ENCODE measurements at regions of chr1 and their contacts with region 1.

Region 1: DNA sequence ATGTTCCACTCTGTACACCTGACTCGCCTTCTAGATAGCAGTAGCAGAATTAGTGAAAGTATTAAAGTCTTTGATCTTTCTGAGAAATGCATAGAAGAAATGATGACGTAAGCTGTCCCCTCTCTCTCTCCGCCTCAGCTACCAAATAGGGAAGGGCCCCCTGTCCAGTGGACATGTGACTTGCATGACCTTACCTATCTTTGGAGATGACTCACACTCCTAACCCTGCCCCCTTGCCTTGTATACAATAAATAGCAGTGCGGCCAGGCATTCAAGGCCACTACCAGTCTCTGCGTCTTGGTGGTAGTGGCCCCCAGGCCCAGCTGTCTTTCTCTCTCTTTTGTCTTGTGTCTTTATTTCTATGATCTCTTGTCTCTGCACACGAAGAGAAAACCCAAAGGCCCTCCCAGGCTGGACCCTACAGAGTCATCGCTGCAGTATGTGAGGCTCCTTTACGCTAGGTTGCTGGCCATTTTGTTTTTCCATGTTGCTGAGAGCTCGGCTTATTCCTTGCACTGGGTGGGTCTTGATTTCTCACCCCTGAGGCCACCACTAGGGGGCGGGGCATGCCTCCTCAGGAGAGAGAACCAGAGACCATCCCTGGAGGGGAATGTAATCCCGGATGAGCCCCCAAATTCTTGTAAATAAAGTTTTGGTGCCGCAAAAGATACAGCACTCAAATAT is 16.0 kb upstream of the ZBTB8B start:
- DNase-seq: no peak
- H3K4me3 ChIP-seq: no peak overlapping the region
- H3K27ac ChIP-seq: no peak overlapping the region
- H3K4me1 ChIP-seq: no peaks in the 10 kb centered on the region
- H3K27me3 ChIP-seq: no peaks in the 10 kb centered on the region
- CTCF ChIP-seq: no peak

Region 2: DNA sequence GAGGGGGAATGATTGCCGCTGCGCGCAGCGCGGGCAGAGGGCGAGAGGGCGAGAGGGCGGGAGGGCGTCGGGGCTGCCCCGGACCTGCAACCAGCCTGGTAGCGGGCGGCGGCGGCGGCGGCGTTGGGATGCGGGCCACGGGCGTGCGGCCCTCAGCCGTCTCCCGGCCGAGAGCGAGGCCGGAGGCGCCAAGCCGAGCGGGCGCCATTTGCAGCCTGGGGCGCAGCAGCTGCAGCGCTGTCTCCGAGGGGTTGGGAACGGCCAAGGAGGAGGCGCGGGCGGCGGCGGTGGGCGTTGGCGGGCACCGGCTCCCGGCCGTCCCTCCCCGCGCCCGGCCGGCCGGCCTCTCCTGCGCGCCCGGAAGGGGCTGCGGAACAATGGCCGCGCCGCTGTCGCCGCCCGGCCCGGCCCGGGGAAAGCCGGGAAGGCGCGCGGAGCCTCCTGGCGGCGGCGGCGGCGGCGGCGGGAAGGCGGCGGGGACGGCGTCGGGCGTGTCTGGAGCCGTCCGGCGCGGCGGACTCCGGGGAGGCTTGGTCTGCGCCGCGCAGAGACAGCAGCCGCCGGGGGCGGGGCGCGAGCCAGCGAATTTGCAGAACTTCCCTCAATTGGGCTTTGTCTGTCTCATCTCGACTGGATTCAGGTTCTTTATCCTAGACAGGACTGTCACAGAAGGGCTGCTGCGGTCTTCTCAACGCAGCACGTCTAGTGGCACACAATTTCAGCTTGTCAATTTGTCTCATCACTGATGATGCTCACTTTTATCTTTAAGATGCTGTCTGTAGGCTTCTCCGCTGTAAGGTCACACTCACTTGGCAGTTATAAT is 51.7 kb after region 1 on chr1:
- intact Hi-C with region 1: loop called (anchors 5 kb)
- DNase-seq: peak in 1 of 2 donors; percentile 79
- H3K4me3 ChIP-seq: peak overlapping the region; percentile 70 to 94
- H3K27ac ChIP-seq: peak overlapping the region; percentile 90 to 93
- H3K4me1 ChIP-seq: peaks cover 0 to 7% of the 10 kb centered on the region in 2 donors
- H3K27me3 ChIP-seq: no peaks in the 10 kb centered on the region
- CTCF ChIP-seq: peak in 1 of 3 experiments; percentile 59

Region 3: DNA sequence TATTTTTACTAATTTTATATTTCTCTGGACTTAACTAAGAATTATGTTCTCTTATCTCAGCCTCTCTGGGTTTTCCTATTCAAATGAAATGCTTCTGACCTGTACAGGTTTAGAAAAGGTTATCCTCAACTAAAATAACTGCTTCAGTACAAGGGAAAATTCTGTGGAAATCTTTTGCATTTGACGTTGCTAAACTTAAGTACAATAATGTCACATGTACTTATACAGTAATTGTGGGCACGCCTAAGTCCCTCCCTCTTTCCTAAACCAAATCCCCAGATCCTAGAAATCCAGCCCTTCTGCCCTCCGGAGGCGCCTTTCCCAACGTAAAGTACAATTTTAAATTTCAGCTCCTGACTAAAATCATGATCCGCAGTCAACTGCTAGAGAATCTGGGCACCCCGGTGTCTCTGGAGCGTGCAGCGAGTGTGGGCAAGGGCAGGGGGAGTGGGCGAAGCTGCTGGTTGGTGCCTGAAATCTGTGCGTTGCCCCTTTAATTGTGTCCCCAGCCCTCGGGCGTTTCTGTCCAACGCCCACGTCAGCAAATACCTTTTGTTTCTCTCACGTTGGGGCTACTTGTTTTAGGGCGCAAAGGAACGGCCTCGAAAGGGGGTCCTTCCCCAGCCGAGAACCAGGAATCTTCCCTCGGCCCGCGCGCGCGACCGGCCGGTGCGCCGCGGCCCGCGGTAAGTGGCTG is 90.1 kb after region 1 on chr1 and contains the start of gene ZBTB8A:
- intact Hi-C with region 1: loop called (anchors 1 kb)
- DNase-seq: peak in 1 of 2 donors; percentile 68
- H3K4me3 ChIP-seq: peak within 1 kb of the TSS; percentile 76 to 89
- H3K27ac ChIP-seq: peak within 1 kb of the TSS; percentile 66 to 67
- H3K4me1 ChIP-seq: peaks cover 0 to 7% of the 10 kb centered on the region in 2 donors
- H3K27me3 ChIP-seq: no peaks in the 10 kb centered on the region
- CTCF ChIP-seq: no peak
- total RNA-seq, gene ZBTB8A: 2.2 TPM

Region 4: DNA sequence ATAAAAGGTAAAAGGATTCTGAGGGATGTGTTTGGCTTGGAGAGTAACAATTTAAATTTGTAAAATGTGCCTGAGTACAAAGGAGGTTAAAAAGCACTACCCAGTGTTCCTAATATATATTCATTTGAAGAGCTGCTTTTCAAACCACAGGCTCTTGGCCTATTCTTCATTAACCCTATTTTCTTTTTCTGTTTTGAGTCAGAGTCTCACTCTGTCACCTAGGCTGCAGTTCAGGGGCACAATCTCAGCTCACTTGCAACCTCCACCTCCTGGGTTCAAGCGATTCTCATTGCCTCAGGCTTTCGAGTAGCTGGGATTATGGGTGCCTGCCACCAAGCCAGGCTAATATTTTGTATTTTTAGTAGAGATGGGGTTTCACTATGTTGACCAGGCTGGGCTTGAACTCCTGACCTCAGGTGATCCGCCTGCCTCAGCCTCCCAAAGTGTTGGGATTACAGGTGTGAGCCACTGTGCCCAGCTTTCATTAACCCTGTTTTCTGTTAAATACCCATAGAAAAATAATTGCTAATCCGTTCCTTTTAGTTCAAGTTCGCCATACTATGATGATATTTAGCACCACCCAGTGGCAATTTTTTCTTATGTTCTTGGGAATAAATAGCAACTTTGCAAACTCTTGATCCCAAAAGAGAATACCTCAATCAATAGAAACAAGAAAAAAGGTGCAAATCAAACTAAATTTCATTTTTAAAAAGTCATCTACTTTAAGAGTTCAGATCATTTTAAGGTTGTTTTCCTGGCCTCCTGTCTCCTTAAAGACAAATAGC is 171.0 kb after region 1 on chr1:
- intact Hi-C with region 1: loop called (anchors 5 kb)
- DNase-seq: no peak
- H3K4me3 ChIP-seq: no peak overlapping the region
- H3K27ac ChIP-seq: no peak overlapping the region
- H3K4me1 ChIP-seq: no peaks in the 10 kb centered on the region
- H3K27me3 ChIP-seq: no peaks in the 10 kb centered on the region
- CTCF ChIP-seq: no peak

Region 5: DNA sequence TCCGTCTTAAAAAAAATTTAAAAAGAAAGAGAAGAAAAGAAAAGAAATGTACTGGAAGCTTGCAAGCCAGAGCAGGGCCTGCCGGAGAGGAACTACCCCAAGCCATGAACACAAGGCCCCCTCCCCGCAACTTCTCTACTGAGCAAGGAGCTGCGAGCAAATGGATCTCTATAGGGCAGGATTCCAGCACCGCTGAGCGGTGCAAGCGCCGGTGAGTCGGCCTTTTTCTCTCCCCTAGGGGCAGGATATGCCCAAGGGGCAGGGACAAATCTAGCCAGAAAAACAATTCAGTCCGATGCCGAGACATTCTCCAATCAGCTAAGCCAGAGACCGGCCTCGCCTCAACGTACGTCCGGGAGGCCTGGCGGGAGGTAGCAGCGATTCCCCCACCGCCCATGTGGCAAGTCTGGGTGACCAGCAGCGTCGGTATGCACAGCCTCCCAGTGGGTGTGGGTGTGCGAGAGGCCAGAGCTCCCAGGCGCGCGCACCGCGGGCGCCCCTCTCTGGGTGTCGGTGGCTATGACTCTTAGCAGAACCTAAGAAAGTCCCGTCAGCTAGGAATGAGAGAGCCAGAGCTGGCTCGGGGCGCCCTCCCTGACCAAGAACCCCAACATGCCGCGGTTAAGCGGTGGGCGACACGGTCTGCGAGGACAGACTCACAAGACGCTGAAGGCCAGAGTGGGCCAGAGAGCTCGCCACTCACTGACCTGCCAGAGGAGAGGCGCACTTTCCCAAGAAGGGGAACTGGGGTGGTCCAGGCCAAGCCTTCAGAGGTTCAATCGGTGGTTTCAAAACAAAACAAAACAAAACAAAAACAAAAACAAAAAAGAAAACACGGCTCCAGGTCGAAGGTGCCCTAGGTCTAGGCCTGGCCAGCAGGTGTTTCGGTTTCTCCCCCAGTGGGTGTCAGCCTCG is 1714.2 kb after region 1 on chr1:
- intact Hi-C with region 1: no loop called
- DNase-seq: peak; percentile 47 to 88
- H3K4me3 ChIP-seq: peak overlapping the region; percentile 57 to 59
- H3K27ac ChIP-seq: peak overlapping the region; percentile 29 to 63
- H3K4me1 ChIP-seq: peaks cover 3 to 28% of the 10 kb centered on the region in 2 donors
- H3K27me3 ChIP-seq: peaks cover 8% of the 10 kb centered on the region
- CTCF ChIP-seq: peak; percentile 52 to 92 (median 80)

Measured in ascending aorta (tissue), 2 donors.